ENCODE measurements at regions of chr17 and their contacts with region 1.

Region 1: DNA sequence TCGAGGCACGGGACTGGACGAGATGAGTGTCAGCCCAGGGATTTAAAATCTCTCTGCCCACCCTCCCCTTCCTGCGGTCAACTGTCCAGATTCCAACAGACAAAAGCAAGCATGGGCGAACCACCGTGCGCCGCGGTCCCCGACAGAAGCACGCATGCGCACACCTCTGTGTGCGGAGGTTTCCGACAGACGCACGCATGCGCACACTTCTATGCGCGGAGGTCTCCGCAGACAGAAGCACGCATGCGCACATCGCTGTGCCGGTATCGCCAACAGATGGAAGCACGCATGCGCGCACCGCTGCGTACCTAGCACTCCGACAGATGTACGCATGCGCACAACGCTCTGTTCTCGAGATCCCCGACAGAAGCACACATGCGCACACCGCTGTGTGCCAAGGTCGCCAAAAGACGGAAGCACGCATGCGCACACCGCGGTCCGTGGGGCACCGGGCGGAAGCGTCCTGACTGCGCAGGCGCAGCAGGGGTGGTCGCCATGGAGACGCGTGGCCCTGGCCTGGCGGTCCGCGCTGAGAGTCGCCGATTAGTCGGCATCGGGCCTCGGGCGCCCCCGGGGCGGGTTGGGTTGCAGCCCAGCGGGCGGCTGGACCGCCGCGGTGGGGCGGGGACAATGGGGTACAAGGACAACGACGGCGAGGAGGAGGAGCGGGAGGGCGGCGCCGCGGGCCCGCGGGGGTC is 57.4 kb upstream of the RPH3AL start:
- DNase-seq: peak; percentile 97 to 99 (median 99)
- H3K4me3 ChIP-seq: peak overlapping the region; percentile 68 to 70
- H3K4me3 Mint-ChIP-seq: peak overlapping the region; percentile 88 to 97 (median 93)
- H3K27ac ChIP-seq: peak overlapping the region; percentile 85
- H3K27ac Mint-ChIP-seq: peak overlapping the region; percentile 93 to 99 (median 96)
- H3K4me1 ChIP-seq: peaks cover 55% of the 10 kb centered on the region
- H3K4me1 Mint-ChIP-seq: peaks cover 53 to 79% (median 66%) of the 10 kb centered on the region in 4 donors
- H3K27me3 ChIP-seq: no peaks in the 10 kb centered on the region
- H3K27me3 Mint-ChIP-seq: peaks cover 2% of the 10 kb centered on the region in 2 donors

Region 2: DNA sequence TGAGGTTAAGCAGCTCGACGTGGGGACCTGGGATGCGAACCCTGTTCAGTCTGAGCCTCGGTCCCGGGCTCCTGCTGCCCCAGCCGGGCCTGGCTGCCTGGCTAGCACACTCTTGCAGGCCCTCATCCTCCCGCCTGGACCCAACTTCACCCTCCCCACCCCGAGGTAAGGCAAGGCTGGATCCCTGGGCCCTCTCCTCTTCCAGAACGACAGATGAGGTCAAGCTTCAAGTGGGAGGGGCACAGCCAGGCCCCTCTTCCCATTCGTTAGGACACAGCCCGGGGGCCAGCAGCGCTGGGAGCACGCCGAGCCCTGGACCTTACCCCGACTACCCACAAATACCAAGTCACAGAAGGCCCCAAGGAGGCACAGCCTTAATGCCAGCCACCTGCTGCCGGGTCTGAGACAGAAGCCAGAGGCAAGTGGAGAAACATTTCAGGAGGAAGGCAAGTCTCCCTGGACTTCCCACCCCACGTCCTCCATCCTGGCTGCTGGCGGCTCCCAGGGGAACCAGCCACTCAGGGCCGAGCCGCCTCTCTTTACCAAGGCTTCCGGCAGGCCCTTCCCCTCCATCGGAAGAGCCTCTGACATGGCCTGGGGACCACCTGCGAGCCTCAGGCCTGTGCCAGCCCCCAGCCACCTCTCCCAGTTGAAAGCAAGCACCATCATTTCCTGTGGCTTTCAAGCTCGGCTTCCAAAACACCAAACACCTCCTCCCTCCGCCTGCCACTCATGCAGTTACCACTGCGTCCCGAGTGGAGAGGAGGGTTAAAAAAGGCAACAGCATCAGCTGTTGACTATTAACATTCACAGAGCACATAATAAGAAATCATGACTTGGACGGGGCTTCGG is 117.2 kb before region 1 on chr17:
- CTCF ChIA-PET with region 1: no interaction called
- POLR2A ChIA-PET with region 1: no interaction called
- intact Hi-C with region 1: no loop called
- DNase-seq: no peak
- H3K4me3 ChIP-seq: no peak overlapping the region
- H3K4me3 Mint-ChIP-seq: peak overlapping the region in 1 of 8 donors; percentile 67
- H3K27ac ChIP-seq: no peak overlapping the region
- H3K27ac Mint-ChIP-seq: peak overlapping the region in 1 of 7 donors; percentile 42
- H3K4me1 ChIP-seq: no peaks in the 10 kb centered on the region
- H3K4me1 Mint-ChIP-seq: peaks cover 1 to 6% (median 4%) of the 10 kb centered on the region in 4 donors
- H3K27me3 ChIP-seq: no peaks in the 10 kb centered on the region
- H3K27me3 Mint-ChIP-seq: peaks cover 0 to 5% of the 10 kb centered on the region in 2 donors

Region 3: GRCh38 chr17:379531-380465 is 30.2 kb before region 1 on chr17:
- CTCF ChIA-PET with region 1: no interaction called
- POLR2A ChIA-PET with region 1: no interaction called
- intact Hi-C with region 1: no loop called
- DNase-seq: no peak
- H3K4me3 ChIP-seq: no peak overlapping the region
- H3K4me3 Mint-ChIP-seq: no peak overlapping the region
- H3K27ac ChIP-seq: no peak overlapping the region
- H3K27ac Mint-ChIP-seq: peak overlapping the region in 3 of 7 donors; percentile 23 to 73 (median 68)
- H3K4me1 ChIP-seq: no peaks in the 10 kb centered on the region
- H3K4me1 Mint-ChIP-seq: peaks cover 5 to 32% (median 13%) of the 10 kb centered on the region in 4 donors
- H3K27me3 ChIP-seq: no peaks in the 10 kb centered on the region
- H3K27me3 Mint-ChIP-seq: peaks cover 0 to 2% of the 10 kb centered on the region in 2 donors

Region 4: GRCh38 chr17:444879-445454 is 35.0 kb after region 1 on chr17:
- CTCF ChIA-PET with region 1: interaction called, 10 read pairs
- POLR2A ChIA-PET with region 1: interaction called, 3 read pairs
- intact Hi-C with region 1: no loop called
- DNase-seq: no peak
- H3K4me3 ChIP-seq: no peak overlapping the region
- H3K4me3 Mint-ChIP-seq: no peak overlapping the region
- H3K27ac ChIP-seq: no peak overlapping the region
- H3K27ac Mint-ChIP-seq: peak overlapping the region in 1 of 7 donors; percentile 50
- H3K4me1 ChIP-seq: peaks cover 18% of the 10 kb centered on the region
- H3K4me1 Mint-ChIP-seq: peaks cover 2 to 19% (median 10%) of the 10 kb centered on the region in 4 donors
- H3K27me3 ChIP-seq: no peaks in the 10 kb centered on the region
- H3K27me3 Mint-ChIP-seq: no peaks in the 10 kb centered on the region

Region 5: GRCh38 chr17:688100-688989 is 278.3 kb after region 1 on chr17:
- CTCF ChIA-PET with region 1: interaction called, 22 read pairs
- POLR2A ChIA-PET with region 1: interaction called, 3 read pairs
- intact Hi-C with region 1: no loop called
- DNase-seq: peak in 2 of 5 donors; percentile 5 to 6
- H3K4me3 ChIP-seq: no peak overlapping the region
- H3K4me3 Mint-ChIP-seq: no peak overlapping the region
- H3K27ac ChIP-seq: no peak overlapping the region
- H3K27ac Mint-ChIP-seq: peak overlapping the region in 3 of 7 donors; percentile 48 to 79 (median 69)
- H3K4me1 ChIP-seq: no peaks in the 10 kb centered on the region
- H3K4me1 Mint-ChIP-seq: peaks cover 0 to 6% (median 3%) of the 10 kb centered on the region in 4 donors
- H3K27me3 ChIP-seq: no peaks in the 10 kb centered on the region
- H3K27me3 Mint-ChIP-seq: no peaks in the 10 kb centered on the region

Region 6: GRCh38 chr17:716238-716637 is 306.2 kb after region 1 on chr17:
- CTCF ChIA-PET with region 1: interaction called, 8 read pairs
- POLR2A ChIA-PET with region 1: interaction called, 4 read pairs
- intact Hi-C with region 1: loop called (anchors 1 kb)
- DNase-seq: no peak
- H3K4me3 ChIP-seq: no peak overlapping the region
- H3K4me3 Mint-ChIP-seq: peak overlapping the region in 5 of 8 donors; percentile 17 to 66 (median 63)
- H3K27ac ChIP-seq: no peak overlapping the region
- H3K27ac Mint-ChIP-seq: no peak overlapping the region
- H3K4me1 ChIP-seq: peaks cover 19% of the 10 kb centered on the region
- H3K4me1 Mint-ChIP-seq: peaks cover 13 to 33% (median 23%) of the 10 kb centered on the region in 4 donors
- H3K27me3 ChIP-seq: no peaks in the 10 kb centered on the region
- H3K27me3 Mint-ChIP-seq: peaks cover 0 to 2% of the 10 kb centered on the region in 2 donors

Region 7: GRCh38 chr17:781805-782731 is 372.1 kb after region 1 on chr17 and contains the starts of genes GLOD4 and MRM3:
- CTCF ChIA-PET with region 1: no interaction called
- POLR2A ChIA-PET with region 1: no interaction called
- intact Hi-C with region 1: loop called (anchors 1 kb)
- DNase-seq: peak; percentile 93 to 97 (median 95)
- H3K4me3 ChIP-seq: peak within 1 kb of the TSS; percentile 99 to 100
- H3K4me3 Mint-ChIP-seq: peak within 1 kb of the TSS; percentile 94 to 98 (median 96)
- H3K27ac ChIP-seq: peak within 1 kb of the TSS; percentile 90
- H3K27ac Mint-ChIP-seq: peak within 1 kb of the TSS; percentile 96 to 99 (median 99)
- H3K4me1 ChIP-seq: peaks cover 38% of the 10 kb centered on the region
- H3K4me1 Mint-ChIP-seq: peaks cover 22 to 43% (median 34%) of the 10 kb centered on the region in 4 donors
- H3K27me3 ChIP-seq: no peaks in the 10 kb centered on the region
- H3K27me3 Mint-ChIP-seq: no peaks in the 10 kb centered on the region
- total RNA-seq, gene GLOD4: 94.9 to 97.2 TPM
- total RNA-seq, gene MRM3: 18.6 to 20.9 TPM

Region 8: GRCh38 chr17:996554-997344 is 586.8 kb after region 1 on chr17 and contains the start of gene TIMM22:
- CTCF ChIA-PET with region 1: interaction called, 5 read pairs
- POLR2A ChIA-PET with region 1: interaction called, 4 read pairs
- intact Hi-C with region 1: loop called (anchors 5 kb)
- DNase-seq: peak; percentile 94 to 95 (median 95)
- H3K4me3 ChIP-seq: peak within 1 kb of the TSS; percentile 84 to 99
- H3K4me3 Mint-ChIP-seq: peak within 1 kb of the TSS; percentile 96 to 99 (median 98)
- H3K27ac ChIP-seq: peak within 1 kb of the TSS; percentile 83
- H3K27ac Mint-ChIP-seq: peak within 1 kb of the TSS; percentile 96 to 99 (median 99)
- H3K4me1 ChIP-seq: peaks cover 18% of the 10 kb centered on the region
- H3K4me1 Mint-ChIP-seq: peaks cover 13 to 34% (median 22%) of the 10 kb centered on the region in 4 donors
- H3K27me3 ChIP-seq: no peaks in the 10 kb centered on the region
- H3K27me3 Mint-ChIP-seq: no peaks in the 10 kb centered on the region
- total RNA-seq, gene TIMM22: 12.3 to 13.2 TPM